RWPE1 (cell line): ENCODE measurements at regions of chr15 and their contacts with region 1.

Region 1: GRCh38 chr15:76139368-76140073 is 79.7 kb downstream of the TMEM266 start:
- DNase-seq: peak; percentile 84
- H3K27ac ChIP-seq: no peak overlapping the region
- CTCF ChIP-seq: peak; percentile 88

Region 2: GRCh38 chr15:76057332-76058000 is 82.1 kb before region 1 on chr15:
- CTCF ChIA-PET with region 1: interaction called, 62 read pairs
- POLR2A ChIA-PET with region 1: no interaction called
- DNase-seq: peak; percentile 45
- H3K27ac ChIP-seq: no peak overlapping the region
- CTCF ChIP-seq: peak; percentile 89

Region 3: GRCh38 chr15:76347482-76348055 is 208.0 kb after region 1 on chr15:
- CTCF ChIA-PET with region 1: no interaction called
- POLR2A ChIA-PET with region 1: no interaction called
- DNase-seq: no peak
- H3K27ac ChIP-seq: peak overlapping the region; percentile 74
- CTCF ChIP-seq: no peak